GM18951 (cell line): ENCODE measurements at regions of chr22 and their contacts with region 1.

Region 1: GRCh38 chr22:30116362-30117117 is 36.3 kb downstream of the HORMAD2 start:
- POLR2A ChIP-seq: no peak

Region 2: DNA sequence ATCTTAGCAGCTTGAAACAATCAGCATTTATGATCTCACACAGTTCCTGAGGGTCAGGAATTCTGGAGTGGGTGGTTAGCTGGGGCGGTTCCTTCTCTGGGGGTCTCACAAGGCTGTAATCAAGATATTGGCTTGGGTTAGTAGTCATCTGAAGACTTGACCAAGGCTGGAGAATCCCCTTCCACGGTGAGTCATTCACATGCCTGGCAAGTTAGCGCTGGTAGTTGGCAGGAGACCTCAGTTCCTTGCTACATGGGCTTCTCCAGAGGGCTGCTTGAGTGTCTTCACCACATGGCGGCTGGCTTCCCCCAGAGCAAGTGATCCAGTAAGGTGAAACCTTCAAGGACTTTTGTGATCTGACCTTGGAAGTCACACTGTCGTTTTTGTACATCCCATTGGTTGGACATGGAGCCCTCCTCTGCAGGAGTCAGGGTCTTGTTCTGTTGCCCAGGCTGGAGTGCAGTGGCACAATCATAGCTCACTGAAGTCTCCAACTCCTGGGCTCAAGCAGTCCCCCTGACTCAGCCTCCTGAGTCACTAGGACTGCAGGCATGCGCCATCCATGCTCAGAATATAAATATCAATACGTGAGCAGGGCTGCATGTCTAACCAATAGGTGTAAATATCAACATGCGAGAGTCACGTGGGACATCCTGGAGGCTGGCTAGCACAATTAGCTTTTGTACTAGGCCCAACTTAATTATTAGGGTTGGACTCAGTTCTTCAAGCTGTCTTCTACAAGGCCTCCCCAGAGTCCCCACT is 528.4 kb before region 1 on chr22:
- in situ Hi-C with region 1: no loop called
- POLR2A ChIP-seq: no peak

Region 3: DNA sequence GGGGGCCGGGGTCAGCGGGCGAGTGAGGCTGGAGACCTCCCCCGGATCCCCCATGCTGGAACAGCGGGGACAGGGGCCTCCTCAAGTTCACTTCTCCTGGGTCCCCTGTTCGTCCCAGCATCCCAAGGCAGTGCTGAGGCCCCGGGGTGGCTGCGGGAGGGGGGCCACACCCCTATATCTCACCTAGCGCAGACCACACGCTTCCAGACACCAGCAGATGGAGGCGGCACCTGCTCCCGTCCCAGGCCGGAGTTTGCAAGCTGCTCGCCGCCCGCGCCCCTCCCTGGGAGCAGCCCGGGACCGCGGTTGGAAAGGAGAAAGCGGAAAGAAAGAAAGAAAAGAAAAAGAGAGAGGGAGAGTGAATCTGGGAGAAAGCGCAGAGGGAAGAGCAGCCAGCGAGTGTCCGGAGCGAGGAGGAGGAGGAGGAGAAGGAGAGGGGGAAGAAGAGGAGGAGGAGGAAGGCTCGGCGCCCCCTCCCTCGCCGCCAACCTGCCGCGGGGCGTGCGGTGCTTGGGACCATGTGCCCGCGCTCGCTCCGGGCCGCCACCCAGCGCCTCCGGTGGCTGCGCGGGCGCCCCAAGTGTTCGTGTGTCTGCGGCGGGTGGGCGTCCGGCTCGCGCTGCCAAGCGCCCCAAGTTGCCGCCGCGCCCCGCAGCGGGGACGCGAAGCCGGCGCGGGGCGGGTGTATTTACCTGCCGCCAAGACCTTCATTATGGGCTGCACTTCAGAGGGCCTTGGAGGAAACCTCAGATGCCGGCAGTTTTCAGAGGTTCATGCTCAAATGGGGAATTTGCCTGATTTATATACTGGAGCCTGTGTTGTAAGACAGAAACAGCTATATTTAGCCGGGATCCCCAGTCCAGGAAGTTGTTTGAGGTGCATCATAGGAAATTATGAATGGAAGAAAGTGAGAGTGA is 129.7 kb after region 1 on chr22 and contains the start of gene LIF:
- in situ Hi-C with region 1: loop called (anchors 25 kb)
- POLR2A ChIP-seq: peak; percentile 18

Region 4: DNA sequence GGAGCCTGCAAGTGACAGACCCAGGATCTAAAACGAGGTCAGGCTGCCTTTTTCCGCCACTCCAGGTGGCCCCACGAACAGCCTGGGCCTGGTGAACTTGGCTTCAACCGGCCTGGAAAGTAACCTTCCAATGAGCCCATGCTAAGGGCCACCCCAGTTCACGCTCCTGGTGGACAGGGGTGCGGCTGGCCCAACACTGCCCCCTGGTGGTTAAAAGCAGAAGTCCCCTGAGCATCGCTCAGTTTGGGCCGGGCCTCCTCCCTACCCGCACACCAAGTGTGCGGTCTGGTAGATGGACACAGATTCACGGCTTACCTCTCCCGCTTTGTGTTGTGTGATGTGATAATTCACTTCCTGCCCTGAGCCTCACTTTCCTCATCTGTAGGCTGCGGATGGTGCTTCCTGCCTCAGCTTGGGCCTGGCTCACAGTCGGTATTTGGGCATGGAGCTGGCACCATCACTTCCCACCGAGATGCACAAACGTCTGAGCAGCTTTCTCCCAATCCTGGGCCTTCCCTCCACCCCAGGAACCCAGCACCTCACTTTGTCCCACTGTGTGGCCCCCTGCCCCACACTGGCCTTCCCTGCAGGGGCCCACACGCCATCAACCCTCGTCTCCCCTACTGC is 368.9 kb after region 1 on chr22:
- in situ Hi-C with region 1: loop called (anchors 25 kb)
- POLR2A ChIP-seq: no peak